Activated CD4-positive, alpha-beta memory T cell treated with anti-CD3 and anti-CD28 coated beads for 36 hours (primary cell): ENCODE measurements at regions of chr14 and their contacts with region 1.

Region 1: DNA sequence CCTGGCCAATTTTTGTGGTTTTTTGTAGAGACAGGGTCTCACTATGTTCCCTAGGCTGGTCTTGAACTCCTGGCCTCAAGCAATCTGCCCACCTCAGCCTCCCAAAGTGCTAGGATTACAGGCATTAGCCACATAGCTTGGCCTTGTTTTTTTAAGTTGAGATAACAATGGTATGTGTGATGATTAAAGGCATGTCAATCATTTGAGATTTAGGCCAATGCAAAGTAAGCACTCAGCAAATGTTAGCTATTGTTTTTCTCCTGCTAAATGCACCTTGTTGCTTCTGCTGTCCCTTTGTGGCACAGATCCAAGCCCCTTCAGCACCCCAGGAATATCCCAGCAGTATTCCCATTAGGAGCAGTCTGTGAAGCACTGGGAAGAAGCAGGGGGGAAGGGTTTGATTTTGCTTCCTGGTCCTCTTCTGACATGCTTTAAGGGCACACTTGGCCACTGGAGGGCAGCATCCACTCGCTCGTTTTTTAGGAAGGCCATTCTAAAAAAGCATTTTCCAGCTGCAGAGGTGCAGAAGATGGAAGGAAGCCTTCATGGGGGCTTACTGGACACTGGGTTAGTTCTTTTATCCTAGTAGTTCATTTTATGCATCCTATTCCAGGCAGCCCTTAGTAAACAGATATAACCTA is 70.2 kb upstream of the ZFP36L1 start:
- DNase-seq: peak; percentile 82
- H3K4me3 Mint-ChIP-seq: no peak overlapping the region
- H3K27ac Mint-ChIP-seq: no peak overlapping the region
- H3K4me1 Mint-ChIP-seq: no peaks in the 10 kb centered on the region
- H3K27me3 Mint-ChIP-seq: no peaks in the 10 kb centered on the region

Region 2: DNA sequence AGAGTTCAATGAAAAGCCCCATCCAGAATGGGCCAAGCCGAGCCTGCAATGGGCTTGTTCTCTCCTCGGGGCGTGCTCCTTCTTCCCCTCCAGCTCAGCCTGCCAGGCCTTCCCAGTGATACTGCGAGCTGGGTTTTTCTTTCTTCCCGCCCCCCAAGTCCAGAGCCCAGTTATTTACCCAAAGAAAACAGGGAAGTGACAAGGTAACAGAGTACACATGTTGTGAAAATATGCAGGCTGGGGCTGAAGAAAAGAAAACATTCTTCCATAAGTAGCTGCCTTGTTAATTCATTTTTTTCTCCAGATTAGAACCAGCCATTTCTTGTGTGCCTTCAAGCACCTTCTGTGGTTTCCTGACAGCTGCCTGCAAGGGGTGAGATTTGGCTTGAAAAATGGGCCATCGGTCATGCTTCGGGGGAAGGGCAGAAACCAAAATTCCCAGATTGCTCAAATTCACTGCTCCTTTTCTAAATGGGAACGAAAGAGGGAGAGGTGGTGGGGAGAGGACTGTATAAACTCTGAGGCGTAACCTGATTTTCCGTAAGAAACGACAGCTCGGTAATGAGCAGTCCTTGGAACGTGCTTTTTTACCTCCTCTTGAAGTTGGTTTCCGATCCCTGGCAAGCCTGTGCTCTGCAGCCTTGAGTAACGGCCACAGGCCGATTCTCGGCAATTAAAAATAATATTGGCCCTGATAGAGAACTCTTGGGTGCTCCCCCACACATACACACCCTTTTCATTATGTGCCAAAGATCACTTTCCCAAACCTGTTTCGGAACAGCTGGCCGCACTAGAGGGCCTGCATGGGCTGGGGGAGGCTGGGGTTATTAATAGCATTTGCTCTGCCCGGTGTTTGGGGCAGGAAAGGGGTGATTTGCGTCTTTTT is 299.6 kb before region 1 on chr14:
- CTCF ChIA-PET with region 1: no interaction called
- POLR2A ChIA-PET with region 1: no interaction called
- intact Hi-C with region 1: no loop called
- DNase-seq: no peak
- H3K4me3 Mint-ChIP-seq: no peak overlapping the region
- H3K27ac Mint-ChIP-seq: no peak overlapping the region
- H3K4me1 Mint-ChIP-seq: peaks cover 11% of the 10 kb centered on the region
- H3K27me3 Mint-ChIP-seq: no peaks in the 10 kb centered on the region

Region 3: DNA sequence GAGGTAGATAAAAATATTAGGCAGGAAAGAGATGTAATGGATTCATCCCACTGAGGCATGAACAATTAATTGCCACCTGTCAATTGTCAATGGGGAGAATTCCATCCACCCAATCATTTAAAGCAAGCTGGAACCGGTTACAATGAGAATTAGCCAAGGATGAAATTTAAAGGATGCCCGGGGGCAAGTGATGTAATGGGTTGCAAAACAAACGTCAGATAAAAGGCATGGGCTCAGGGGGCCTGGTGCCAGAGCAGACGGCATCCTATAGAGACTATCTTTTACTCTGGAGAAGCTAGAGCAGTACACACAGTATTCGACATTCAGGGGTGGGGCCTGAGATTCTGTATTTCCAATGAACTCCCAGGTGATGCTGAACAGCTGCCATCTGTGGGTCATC is 10.3 kb after region 1 on chr14:
- CTCF ChIA-PET with region 1: interaction called, 16 read pairs
- POLR2A ChIA-PET with region 1: no interaction called
- intact Hi-C with region 1: no loop called
- DNase-seq: no peak
- H3K4me3 Mint-ChIP-seq: no peak overlapping the region
- H3K27ac Mint-ChIP-seq: no peak overlapping the region
- H3K4me1 Mint-ChIP-seq: no peaks in the 10 kb centered on the region
- H3K27me3 Mint-ChIP-seq: no peaks in the 10 kb centered on the region

Region 4: DNA sequence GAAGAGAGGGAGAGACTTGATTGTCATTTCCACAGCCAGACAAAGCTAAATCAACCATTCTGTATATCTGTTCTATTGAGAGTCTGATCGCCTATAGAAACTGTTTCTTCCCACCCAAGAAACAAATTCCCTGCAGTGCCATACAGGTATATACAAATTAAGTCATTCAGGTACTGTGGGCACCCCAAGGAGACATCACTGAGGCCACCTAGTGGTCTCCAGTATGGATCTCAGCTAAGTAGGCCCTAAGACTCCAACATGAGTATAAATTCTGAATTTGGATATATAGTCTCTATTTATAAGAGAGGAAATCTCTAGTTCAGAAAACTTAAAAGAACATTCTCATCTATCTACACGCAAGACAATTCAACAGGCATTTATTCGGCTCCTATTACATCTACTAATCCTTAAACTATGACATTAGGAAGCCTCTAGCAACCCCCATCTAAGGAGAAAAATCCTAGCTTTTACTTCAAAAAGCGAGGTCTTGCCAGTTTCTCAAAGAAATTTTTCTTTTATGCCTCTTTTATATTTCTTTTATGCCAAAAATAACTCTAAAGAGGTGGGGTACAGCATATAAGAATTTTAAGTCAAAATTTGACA is 227.2 kb after region 1 on chr14:
- CTCF ChIA-PET with region 1: interaction called, 16 read pairs
- POLR2A ChIA-PET with region 1: no interaction called
- intact Hi-C with region 1: loop called (anchors 5 kb)
- DNase-seq: peak; percentile 27
- H3K4me3 Mint-ChIP-seq: no peak overlapping the region
- H3K27ac Mint-ChIP-seq: no peak overlapping the region
- H3K4me1 Mint-ChIP-seq: peaks cover 7% of the 10 kb centered on the region
- H3K27me3 Mint-ChIP-seq: no peaks in the 10 kb centered on the region

Region 5: DNA sequence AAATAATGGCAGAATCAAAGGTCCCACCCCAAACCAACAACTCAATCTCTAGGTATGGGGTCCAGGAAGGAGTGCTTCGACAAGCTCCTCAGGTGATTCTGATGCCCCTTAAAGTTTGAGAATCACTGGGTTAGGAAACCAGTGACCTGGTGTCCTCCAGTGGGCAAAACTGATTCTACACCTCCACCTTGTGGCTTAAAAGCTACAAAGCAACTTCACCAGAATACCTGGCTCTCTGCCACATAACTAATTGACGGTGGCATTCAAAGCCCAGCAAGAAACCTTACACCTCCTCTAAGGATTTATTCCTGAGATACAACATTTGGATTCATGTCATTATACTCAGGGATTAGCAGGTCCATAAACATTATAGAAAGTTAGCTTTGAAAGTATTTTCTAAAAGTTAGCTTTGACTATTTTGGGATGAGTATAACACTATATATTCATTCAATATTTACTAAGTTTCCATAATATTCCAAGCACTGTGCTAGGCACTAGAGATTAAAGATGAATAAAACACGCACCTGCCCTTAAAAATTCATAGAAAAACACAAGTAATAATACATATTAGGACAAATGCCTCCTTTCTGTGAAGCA is 244.4 kb after region 1 on chr14:
- CTCF ChIA-PET with region 1: interaction called, 44 read pairs
- POLR2A ChIA-PET with region 1: no interaction called
- intact Hi-C with region 1: loop called (anchors 1 kb)
- DNase-seq: peak; percentile 26
- H3K4me3 Mint-ChIP-seq: no peak overlapping the region
- H3K27ac Mint-ChIP-seq: no peak overlapping the region
- H3K4me1 Mint-ChIP-seq: peaks cover under 1% of the 10 kb centered on the region
- H3K27me3 Mint-ChIP-seq: no peaks in the 10 kb centered on the region